WTC11 (cell line): ENCODE measurements at regions of chr1 and their contacts with region 1.

Region 1: DNA sequence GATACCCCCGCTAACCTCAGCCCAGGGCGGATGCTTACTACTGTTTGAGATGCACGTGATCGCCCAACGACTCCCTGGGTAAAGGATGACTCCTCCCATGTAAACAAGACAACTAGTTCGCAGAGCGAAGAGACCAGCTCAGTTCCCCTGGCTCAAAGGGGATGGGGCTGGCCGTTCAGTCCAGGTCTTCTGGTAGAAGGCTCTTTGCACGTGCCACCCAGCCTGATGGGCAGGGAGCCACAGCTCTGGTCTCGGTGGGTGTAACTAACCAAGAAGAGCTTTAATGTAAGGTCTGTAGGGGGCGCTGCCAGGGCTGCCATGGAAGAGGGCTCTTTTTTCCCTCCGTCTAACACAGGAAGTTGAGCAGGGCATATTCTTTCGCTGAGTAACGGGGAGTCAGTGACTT is 49.4 kb upstream of the PARP1 start:
- DNase-seq: peak; percentile 62
- ATAC-seq: peak; percentile 91
- H3K4me3 Mint-ChIP-seq: no peak overlapping the region
- H3K27ac Mint-ChIP-seq: no peak overlapping the region; the same call in 1 of the 2 replicates
- H3K4me1 Mint-ChIP-seq: peaks cover 20% of the 10 kb centered on the region
- H3K27me3 Mint-ChIP-seq: no peaks in the 10 kb centered on the region
- CTCF ChIP-seq: peak; percentile 70; the same call in 1 of the 2 replicates

Region 2: GRCh38 chr1:226432586-226433340 is 24.5 kb before region 1 on chr1:
- CTCF ChIA-PET with region 1: interaction called, 13 read pairs
- POLR2A ChIA-PET with region 1: no interaction called
- DNase-seq: no peak
- ATAC-seq: peak; percentile 38
- H3K4me3 Mint-ChIP-seq: no peak overlapping the region
- H3K27ac Mint-ChIP-seq: no peak overlapping the region; the same call in 1 of the 2 replicates
- H3K4me1 Mint-ChIP-seq: peaks cover 10% of the 10 kb centered on the region
- H3K27me3 Mint-ChIP-seq: 0 out of 2 replicates have a peak, but pooled peaks cover 4% of the 10 kb centered on the region
- CTCF ChIP-seq: no peak

Region 3: DNA sequence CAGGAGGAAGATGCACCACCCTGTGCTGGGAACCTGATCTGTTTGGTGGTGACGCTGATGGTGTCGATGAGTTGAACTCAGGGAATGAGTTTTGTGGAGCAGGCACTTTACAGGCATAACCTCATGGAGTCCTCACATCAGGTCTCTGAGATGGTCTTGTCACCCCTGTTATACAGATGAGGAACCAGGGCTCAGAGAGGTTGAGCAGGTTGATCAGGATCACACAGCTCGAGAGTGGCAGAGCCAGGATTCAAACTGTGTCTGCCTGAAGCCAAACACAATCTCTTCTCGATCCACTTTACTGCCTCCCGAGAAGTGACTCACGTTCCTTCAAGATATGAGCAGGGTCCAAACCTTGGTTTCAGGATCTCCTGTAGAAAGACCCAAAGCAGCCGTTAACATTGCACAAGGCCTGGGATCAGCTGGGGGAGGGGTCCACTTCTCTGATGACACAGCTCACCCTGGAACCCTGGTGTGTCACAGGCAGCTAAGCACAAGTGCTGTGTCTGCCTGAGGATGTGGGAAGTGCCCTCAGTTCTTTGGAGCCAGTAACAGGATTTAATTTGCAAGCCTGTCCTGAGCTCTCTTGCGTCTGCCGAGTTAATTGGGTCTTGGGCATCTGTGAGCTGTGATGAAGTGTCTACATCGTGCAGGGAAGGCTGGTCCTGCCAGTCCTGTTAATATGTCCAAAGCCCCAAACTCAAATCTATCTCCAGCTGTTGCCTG is 25.8 kb after region 1 on chr1:
- CTCF ChIA-PET with region 1: interaction called, 14 read pairs
- POLR2A ChIA-PET with region 1: no interaction called
- DNase-seq: no peak
- ATAC-seq: no peak
- H3K4me3 Mint-ChIP-seq: no peak overlapping the region
- H3K27ac Mint-ChIP-seq: no peak overlapping the region
- H3K4me1 Mint-ChIP-seq: no peaks in the 10 kb centered on the region
- H3K27me3 Mint-ChIP-seq: no peaks in the 10 kb centered on the region
- CTCF ChIP-seq: no peak

Region 4: GRCh38 chr1:226519716-226520598 is 62.6 kb after region 1 on chr1:
- CTCF ChIA-PET with region 1: interaction called, 16 read pairs
- POLR2A ChIA-PET with region 1: no interaction called
- DNase-seq: peak; percentile 35
- ATAC-seq: peak; percentile 78
- H3K4me3 Mint-ChIP-seq: no peak overlapping the region; the same call in 1 of the 2 replicates
- H3K27ac Mint-ChIP-seq: no peak overlapping the region
- H3K4me1 Mint-ChIP-seq: peaks cover 25% of the 10 kb centered on the region
- H3K27me3 Mint-ChIP-seq: peaks cover 21% of the 10 kb centered on the region
- CTCF ChIP-seq: no peak

Region 5: GRCh38 chr1:226569879-226570547 is 112.7 kb after region 1 on chr1:
- CTCF ChIA-PET with region 1: interaction called, 22 read pairs
- POLR2A ChIA-PET with region 1: no interaction called
- DNase-seq: peak; percentile 77
- ATAC-seq: peak; percentile 94
- H3K4me3 Mint-ChIP-seq: no peak overlapping the region
- H3K27ac Mint-ChIP-seq: no peak overlapping the region
- H3K4me1 Mint-ChIP-seq: peaks cover 13% of the 10 kb centered on the region
- H3K27me3 Mint-ChIP-seq: no peaks in the 10 kb centered on the region; the same call in 1 of the 2 replicates
- CTCF ChIP-seq: no peak